ENCODE measurements at regions of chr3 and their contacts with region 1.

Region 1: GRCh38 chr3:186361762-186362536 is at the start of gene DGKG:
- DNase-seq: peak; percentile 49 to 96 (median 73)

Region 2: DNA sequence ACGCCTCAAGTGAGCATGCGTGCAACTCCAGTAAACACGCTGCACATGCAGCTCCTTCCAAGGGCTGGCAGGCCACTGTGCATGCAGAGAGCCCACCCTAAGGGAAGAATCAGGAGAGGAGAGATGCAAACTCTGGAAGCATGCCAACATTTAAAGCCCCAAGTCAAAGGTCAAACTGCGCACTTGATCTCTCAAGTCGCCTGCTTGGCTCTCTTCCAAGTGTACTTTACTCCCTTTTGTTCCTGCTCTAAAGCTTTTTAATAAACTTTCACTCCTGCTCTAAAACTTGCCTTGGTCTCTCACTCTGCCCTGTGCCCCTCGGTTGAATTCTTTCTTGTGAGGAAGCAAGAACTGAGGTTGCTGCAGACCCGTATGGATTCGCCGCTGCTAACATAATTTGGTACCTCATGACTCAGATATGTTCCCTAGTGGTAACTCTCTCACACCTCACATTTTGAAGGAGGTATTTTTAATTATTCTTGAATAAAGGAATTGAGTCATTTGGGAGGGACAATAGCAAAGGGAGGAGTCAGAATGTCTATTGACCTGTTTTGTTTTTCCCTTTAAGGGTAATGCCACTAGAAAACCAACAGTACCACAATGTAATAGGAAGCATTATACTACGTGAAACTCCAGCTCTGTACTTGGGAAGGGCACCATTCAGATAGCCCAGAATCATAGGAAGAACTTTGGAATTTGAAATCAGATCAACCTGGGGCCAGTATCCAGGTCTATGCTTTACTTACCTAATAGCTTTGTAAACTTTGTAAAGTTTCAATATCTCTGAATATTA is 19.7 kb after region 1 on chr3:
- intact Hi-C with region 1: no loop called
- DNase-seq: no peak

Region 3: GRCh38 chr3:186413615-186414415 is 51.9 kb after region 1 on chr3:
- intact Hi-C with region 1: loop called (anchors 10 kb)
- DNase-seq: peak; percentile 28 to 92 (median 68)